ENCODE measurements at regions of chr6 and their contacts with region 1.

Region 1: DNA sequence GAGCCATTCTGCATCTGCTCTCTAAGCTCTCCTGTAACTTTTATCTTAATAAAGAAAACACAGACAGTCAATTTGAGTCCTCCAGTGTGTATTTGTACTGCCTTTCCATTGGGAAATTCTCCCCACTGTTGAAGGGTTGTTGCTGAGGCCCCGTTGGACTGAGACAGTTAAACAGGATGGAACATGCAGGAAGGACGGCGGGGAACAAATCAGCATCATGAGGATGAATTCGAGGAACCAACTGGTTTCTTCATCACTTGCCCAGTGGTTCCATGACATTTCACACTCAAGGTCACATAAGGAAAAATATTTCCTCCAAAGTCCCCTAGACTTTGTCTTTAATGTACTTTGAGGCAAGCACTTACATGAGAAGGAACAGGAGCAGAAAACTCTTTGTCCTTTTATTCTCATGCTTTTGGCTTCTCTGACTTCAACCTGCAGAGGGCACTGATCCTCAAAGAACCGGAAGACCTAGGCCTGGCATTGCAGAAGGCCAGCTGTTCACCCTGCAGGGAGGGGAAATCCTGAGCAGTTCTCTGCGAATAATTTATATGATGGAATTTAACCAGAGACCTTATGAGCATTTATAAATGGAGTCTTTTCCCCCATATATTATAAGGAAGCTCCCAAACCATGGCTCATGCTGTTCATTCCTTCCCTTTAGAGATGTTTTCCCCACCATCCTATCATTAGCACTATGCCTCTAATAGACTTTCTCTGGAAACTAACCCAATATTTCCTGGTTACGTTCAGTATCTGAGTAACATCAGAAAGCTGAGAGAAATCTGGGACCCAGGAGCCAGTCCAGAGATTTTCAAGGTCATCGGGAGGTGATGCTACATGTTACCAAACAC is 55.2 kb upstream of the ADGRF1 start:
- DNase-seq: peak; percentile 35 to 59
- ATAC-seq: peak; percentile 88 to 95 (median 92)
- H3K4me3 ChIP-seq: no peak overlapping the region
- H3K27ac ChIP-seq: no peak overlapping the region
- H3K4me1 ChIP-seq: peaks cover 4% of the 10 kb centered on the region
- H3K27me3 ChIP-seq: no peaks in the 10 kb centered on the region
- CTCF ChIP-seq: peak; percentile 73

Region 2: DNA sequence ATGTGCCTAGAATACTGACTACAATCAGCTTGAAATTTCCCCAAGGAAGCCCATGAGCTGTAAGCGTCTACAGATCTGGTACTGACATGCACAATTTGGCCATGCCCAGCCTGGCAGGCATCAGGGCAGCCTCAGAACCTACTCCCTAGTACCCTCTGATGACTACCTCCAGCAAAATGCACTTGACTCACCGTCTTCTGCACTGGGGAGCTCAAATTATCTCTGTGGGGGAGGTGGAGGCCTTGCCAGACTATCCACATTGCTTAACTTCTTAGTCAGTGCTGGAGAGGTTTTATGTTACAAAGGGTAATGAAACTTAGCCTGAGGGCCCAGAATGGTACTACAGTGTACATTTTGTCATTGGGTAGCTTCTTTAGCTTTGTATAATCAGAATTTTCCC is 70.9 kb after region 1 on chr6:
- intact Hi-C with region 1: loop called in 1 of 2 experiments (anchors 5 kb)
- DNase-seq: peak; percentile 66 to 80
- ATAC-seq: peak; percentile 96 to 99 (median 98)
- H3K4me3 ChIP-seq: no peak overlapping the region
- H3K27ac ChIP-seq: peak overlapping the region; percentile 51
- H3K4me1 ChIP-seq: no peaks in the 10 kb centered on the region
- H3K27me3 ChIP-seq: no peaks in the 10 kb centered on the region
- CTCF ChIP-seq: no peak

Region 3: DNA sequence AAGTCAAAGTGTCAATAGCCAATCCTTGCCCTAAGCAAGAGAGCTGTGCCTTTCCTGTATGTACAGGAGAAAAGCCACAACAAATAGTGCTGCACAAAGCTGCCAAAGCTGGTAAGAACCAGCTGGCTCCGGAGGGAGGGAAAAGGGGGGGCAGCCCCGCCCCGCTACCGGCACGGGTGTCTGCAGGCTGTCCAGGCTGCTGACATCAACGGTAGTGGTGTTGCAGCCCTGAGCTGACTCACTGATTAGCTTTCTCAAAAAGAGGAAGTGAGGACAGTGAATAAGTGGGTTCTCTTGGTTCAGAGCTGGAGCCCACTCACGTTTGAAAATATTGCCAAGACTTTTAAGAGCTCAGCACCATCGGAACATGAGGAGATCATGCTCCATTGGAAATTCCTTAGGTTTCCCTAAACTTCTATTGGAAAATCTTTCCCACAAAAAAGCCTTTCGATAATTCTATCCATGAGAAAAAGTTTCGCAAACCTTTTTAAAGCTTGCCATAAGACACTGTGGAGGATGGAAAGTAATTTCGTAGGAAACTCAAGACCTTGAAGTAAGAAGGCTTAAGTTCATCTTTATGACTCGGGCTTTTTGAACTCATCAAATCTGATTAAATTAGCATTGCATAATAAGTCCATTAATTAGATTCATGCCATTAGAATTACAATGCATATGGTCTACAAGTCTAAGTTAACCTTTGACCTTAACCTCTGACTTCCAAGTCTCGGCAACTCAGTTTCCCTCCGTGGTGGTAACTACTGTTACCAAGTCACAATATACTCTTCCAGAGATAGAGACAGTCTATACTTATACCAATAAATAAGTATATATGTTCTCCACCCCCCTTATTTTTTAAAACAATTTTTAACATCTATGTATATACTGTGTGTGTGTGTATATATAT is 145.4 kb after region 1 on chr6:
- intact Hi-C with region 1: loop called in 1 of 2 experiments (anchors 2 kb)
- DNase-seq: peak; percentile 82 to 90
- ATAC-seq: peak; percentile 91 to 96 (median 94)
- H3K4me3 ChIP-seq: no peak overlapping the region
- H3K27ac ChIP-seq: peak overlapping the region; percentile 8
- H3K4me1 ChIP-seq: no peaks in the 10 kb centered on the region
- H3K27me3 ChIP-seq: no peaks in the 10 kb centered on the region
- CTCF ChIP-seq: no peak

Region 4: DNA sequence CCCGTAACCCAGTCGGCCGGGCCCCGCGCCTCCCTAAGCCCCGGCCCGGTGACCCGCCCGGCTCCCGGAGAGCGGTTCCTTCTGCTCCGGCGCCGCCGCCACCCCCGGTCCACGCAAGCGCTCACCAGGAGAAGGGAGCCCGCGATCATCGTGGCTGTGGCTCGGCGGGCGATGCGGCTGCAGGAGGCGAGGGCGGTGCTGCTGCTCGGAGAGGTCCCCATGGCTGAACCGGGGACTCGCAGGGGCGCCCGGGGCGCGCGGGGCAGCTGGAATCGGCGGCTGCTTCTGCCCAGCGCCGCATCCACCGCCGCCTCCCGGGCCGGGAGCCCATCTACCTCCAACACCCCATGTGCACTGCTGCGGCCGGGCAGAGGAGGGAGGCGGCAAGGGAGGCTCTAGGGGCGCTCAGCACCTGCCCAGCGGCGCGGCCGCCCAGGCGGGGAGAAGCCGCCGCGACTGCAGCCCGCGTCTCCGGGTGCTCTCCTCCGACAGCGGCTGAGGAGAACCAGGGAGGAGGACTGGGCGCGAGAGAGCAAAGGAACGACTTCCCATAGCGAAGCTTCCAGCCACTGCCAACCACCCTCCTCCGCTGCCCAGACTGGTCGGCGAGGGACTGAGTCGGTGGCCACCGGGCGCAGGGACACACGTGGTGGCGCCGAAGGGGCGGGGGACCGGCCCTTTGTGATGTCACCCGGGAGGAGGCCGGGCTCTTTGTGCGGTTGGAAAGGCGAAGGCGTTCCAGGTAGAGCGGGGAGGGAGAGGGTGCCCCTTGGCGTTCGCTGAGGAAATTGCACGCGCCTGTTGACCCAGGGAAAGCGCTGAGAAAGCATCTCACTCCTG is 212.2 kb after region 1 on chr6 and contains the start of gene TNFRSF21:
- intact Hi-C with region 1: loop called (anchors 1 to 2 kb)
- DNase-seq: peak; percentile 89 to 95
- ATAC-seq: peak; percentile 98 to 100 (median 99)
- H3K4me3 ChIP-seq: peak within 1 kb of the TSS; percentile 86
- H3K27ac ChIP-seq: peak within 1 kb of the TSS; percentile 59
- H3K4me1 ChIP-seq: peaks cover 3% of the 10 kb centered on the region
- H3K27me3 ChIP-seq: peaks cover 0 to 35% (median 0%) of the 10 kb centered on the region in 3 donors
- CTCF ChIP-seq: peak; percentile 95
- total RNA-seq, gene TNFRSF21: 4.3 to 22.3 (median 8.9) TPM

Region 5: GRCh38 chr6:47769982-47770381 is 672.7 kb after region 1 on chr6:
- intact Hi-C with region 1: loop called in 1 of 2 experiments (anchors 10 kb)
- DNase-seq: no peak
- ATAC-seq: no peak
- H3K4me3 ChIP-seq: no peak overlapping the region
- H3K27ac ChIP-seq: no peak overlapping the region
- H3K4me1 ChIP-seq: no peaks in the 10 kb centered on the region
- H3K27me3 ChIP-seq: no peaks in the 10 kb centered on the region
- CTCF ChIP-seq: no peak